Ascending aorta (tissue), 2 donors: ENCODE measurements at regions of chr1 and their contacts with region 1.

Region 1: GRCh38 chr1:153967082-153968000 is at the start of gene CREB3L4:
- DNase-seq: peak; percentile 73 to 96
- H3K4me3 ChIP-seq: peak within 1 kb of the TSS; percentile 62 to 69
- H3K27ac ChIP-seq: peak within 1 kb of the TSS; percentile 80 to 85
- H3K4me1 ChIP-seq: peaks cover 9 to 20% of the 10 kb centered on the region in 2 donors
- H3K27me3 ChIP-seq: no peaks in the 10 kb centered on the region
- CTCF ChIP-seq: peak; percentile 6 to 43 (median 43)
- total RNA-seq, gene CREB3L4: 6.3 TPM

Region 2: GRCh38 chr1:153936011-153936802 is 31.1 kb before region 1 on chr1:
- intact Hi-C with region 1: no loop called
- DNase-seq: no peak
- H3K4me3 ChIP-seq: no peak overlapping the region
- H3K27ac ChIP-seq: no peak overlapping the region
- H3K4me1 ChIP-seq: no peaks in the 10 kb centered on the region
- H3K27me3 ChIP-seq: no peaks in the 10 kb centered on the region
- CTCF ChIP-seq: no peak

Region 3: DNA sequence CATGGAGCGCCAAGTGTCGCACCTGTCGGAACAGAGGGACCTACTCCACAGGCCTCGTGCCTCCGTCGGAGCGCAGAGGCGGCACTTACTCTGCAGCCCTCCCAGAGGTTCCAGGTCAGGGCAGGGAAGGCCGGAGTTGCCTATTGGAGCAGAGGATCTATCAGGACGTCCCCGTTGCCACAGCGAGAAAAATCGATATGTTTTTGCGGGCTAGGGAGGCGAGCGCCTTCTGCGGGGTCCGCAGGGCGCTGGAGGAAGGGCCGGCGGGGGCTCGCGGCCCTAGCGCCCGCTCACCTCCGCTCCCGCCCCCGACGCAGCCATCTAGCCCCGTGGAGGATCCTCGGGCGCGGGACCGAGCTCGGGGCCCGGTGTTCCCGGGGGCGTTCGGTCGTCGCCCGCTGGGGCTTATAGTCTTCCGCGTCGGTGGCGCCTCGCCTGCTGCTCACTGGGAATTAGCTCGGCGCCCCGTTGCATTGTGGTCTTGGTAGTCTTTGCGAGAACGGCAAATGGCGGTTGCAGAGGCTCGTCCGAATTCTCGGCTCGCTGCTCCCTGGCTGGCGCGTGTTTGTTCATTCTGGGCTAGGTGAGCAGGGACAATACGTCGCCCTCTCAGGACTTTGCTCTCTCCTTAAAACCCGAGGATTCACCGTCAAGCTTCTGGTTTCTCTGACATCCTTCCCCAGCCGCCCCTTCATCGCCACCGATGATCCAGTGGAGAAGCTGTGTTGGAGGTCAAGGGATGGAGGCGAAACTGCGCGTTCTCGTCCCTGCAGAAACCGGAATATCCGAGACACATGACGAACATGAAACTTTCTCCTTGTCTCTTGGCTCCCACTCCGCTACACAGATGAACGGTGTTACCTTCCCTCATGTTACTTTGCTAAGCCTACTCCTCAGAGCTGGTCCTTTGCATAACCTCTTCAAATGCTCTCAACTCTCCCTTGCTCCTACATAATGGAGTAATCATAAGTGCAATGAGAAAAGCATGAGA is 10.2 kb after region 1 on chr1 and contains the start of gene JTB:
- intact Hi-C with region 1: loop called (anchors 1 kb)
- DNase-seq: peak in 1 of 2 donors; percentile 95
- H3K4me3 ChIP-seq: peak within 1 kb of the TSS; percentile 89 to 90
- H3K27ac ChIP-seq: peak within 1 kb of the TSS; percentile 89 to 92
- H3K4me1 ChIP-seq: peaks cover 6 to 14% of the 10 kb centered on the region in 2 donors
- H3K27me3 ChIP-seq: no peaks in the 10 kb centered on the region
- CTCF ChIP-seq: no peak
- total RNA-seq, gene JTB: 166 TPM

Region 4: GRCh38 chr1:154019269-154019668 is 51.9 kb after region 1 on chr1:
- intact Hi-C with region 1: no loop called
- DNase-seq: no peak
- H3K4me3 ChIP-seq: no peak overlapping the region
- H3K27ac ChIP-seq: no peak overlapping the region
- H3K4me1 ChIP-seq: no peaks in the 10 kb centered on the region
- H3K27me3 ChIP-seq: no peaks in the 10 kb centered on the region
- CTCF ChIP-seq: no peak